Heart left ventricle (tissue), 16 donors: ENCODE measurements at regions of chr3 and their contacts with region 1.

Region 1: GRCh38 chr3:194141415-194142155 is 5.6 kb downstream of the HES1 start:
- DNase-seq: peak; percentile 94 to 96 (median 95)
- ATAC-seq: peak; percentile 74 to 86 (median 80)
- H3K4me3 ChIP-seq: peak overlapping the region in 11 of 12 donors; percentile 2 to 74 (median 49)
- H3K27ac ChIP-seq: peak overlapping the region; percentile 87 to 99 (median 98)
- H3K4me1 ChIP-seq: peaks cover 0 to 63% (median 41%) of the 10 kb centered on the region in 12 donors
- H3K27me3 ChIP-seq: peaks cover 0 to 44% (median 0%) of the 10 kb centered on the region in 9 donors
- CTCF ChIP-seq: peak in 2 of 12 donors; percentile 18 to 31
- POLR2A ChIP-seq: no peak

Region 2: DNA sequence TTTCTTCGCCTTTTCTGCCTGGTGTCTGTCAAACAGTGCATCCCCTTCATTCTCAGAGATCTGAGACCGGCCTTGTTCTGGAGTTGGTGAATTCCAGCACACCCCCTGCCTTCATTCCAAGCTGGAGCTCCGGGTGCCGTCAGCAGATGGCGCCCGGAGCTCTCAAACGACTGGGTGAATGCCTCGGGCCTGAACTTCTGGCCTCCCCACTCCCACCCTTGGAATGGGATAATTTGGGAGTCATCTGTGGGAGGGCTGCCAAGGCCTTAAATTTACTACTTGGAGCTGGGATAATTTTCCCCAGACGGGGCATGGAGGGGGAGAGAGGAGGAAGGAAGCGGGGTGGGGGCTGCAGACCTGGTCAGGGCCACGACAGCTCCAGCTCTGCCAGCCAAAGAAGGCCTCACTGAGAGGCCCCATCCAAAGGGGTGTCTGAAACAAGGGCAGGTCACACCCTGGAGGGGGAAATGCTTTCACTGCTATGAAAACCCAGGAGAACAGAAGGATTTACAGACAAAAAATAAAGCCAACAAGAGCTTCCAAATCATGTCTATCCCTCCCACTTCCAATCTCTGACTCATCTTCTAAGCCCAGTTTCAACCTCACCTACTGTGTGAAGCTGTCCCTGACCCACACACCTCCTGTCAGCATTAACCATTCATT is 360.6 kb before region 1 on chr3:
- intact Hi-C with region 1: loop called in 5 of 10 experiments (anchors 1 to 5 kb)
- DNase-seq: peak; percentile 66 to 84 (median 78)
- ATAC-seq: peak; percentile 78 to 94 (median 91)
- H3K4me3 ChIP-seq: no peak overlapping the region
- H3K27ac ChIP-seq: peak overlapping the region in 1 of 12 donors; percentile 44
- H3K4me1 ChIP-seq: peaks cover 0 to 16% (median 7%) of the 10 kb centered on the region in 12 donors
- H3K27me3 ChIP-seq: peaks cover 0 to 61% (median 29%) of the 10 kb centered on the region in 9 donors
- CTCF ChIP-seq: peak; percentile 57 to 87 (median 80)
- POLR2A ChIP-seq: no peak

Region 3: DNA sequence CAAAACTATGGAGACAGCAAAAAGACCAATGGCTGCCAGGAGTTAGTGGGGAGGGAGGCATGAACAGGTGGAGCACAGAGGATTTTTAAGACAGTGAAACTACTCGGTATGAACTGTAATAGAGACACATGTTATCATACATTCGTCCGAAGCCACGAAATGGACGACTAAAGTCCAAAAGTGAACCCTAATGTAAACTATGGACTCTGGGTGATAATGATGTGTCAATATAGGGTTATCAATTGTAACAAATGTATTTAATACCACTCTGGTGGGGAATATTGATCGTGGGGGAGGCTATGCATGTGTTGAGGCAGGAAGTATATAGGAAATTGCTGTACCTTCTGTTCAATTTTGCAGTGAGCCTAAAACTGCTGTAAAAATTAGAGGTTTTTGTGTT is 102.6 kb after region 1 on chr3:
- intact Hi-C with region 1: no loop called
- DNase-seq: no peak
- ATAC-seq: no peak
- H3K4me3 ChIP-seq: no peak overlapping the region
- H3K27ac ChIP-seq: no peak overlapping the region
- H3K4me1 ChIP-seq: peaks cover 0 to 12% (median 2%) of the 10 kb centered on the region in 12 donors
- H3K27me3 ChIP-seq: no peaks in the 10 kb centered on the region
- CTCF ChIP-seq: no peak
- POLR2A ChIP-seq: no peak

Region 4: GRCh38 chr3:194270627-194271459 is 129.3 kb after region 1 on chr3:
- intact Hi-C with region 1: loop called (anchors 1 to 5 kb)
- DNase-seq: peak; percentile 89 to 96 (median 91)
- ATAC-seq: peak; percentile 76 to 90 (median 83)
- H3K4me3 ChIP-seq: peak overlapping the region in 2 of 12 donors; percentile 2 to 19
- H3K27ac ChIP-seq: peak overlapping the region; percentile 82 to 97 (median 92)
- H3K4me1 ChIP-seq: peaks cover 12 to 76% (median 51%) of the 10 kb centered on the region in 12 donors
- H3K27me3 ChIP-seq: no peaks in the 10 kb centered on the region
- CTCF ChIP-seq: no peak
- POLR2A ChIP-seq: no peak

Region 5: GRCh38 chr3:194323785-194324735 is 182.5 kb after region 1 on chr3:
- intact Hi-C with region 1: loop called in 5 of 10 experiments (anchors 2 to 5 kb)
- DNase-seq: peak; percentile 88 to 95 (median 91)
- ATAC-seq: peak; percentile 88 to 95 (median 92)
- H3K4me3 ChIP-seq: peak overlapping the region in 10 of 12 donors; percentile 23 to 53 (median 42)
- H3K27ac ChIP-seq: peak overlapping the region; percentile 4 to 96 (median 84)
- H3K4me1 ChIP-seq: peaks cover 0 to 11% (median 3%) of the 10 kb centered on the region in 12 donors
- H3K27me3 ChIP-seq: peaks cover 0 to 23% (median 6%) of the 10 kb centered on the region in 9 donors
- CTCF ChIP-seq: no peak
- POLR2A ChIP-seq: no peak